PC-3 (cell line): ENCODE measurements at regions of chr6 and their contacts with region 1.

Region 1: DNA sequence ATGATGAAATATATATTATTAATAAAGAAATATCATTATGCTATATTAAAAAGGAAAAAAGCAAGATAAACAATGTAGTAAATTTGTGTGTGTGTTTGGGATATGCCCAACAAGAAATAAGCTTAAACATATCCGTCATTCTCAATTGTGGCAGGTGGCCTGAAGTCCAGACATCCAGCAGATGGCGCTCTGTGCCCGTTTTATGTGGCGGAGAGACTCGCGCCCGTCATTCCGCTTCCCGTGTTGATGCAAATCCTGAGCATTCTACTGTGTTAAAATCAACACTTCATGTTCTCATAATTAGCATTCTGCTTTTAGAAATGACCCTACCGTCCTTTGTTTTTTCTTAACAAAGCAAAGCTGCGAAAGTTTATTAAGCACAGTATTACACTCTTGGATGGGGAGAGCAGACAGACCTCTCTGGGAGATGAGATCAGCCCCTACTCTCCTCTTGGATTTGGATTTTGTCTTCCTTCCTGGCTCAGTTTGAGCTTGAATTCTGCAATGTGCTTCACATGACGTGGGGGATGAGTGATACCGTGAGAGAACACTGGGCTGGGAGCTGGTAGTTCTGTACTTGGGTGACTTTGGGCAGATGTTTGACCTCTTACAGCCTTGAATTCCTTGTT is 125.8 kb downstream of the MCHR2 start:
- DNase-seq: peak; percentile 78
- ATAC-seq: peak; percentile 76
- H3K4me3 ChIP-seq: no peak overlapping the region
- H3K27ac ChIP-seq: no peak overlapping the region
- H3K4me1 ChIP-seq: no peaks in the 10 kb centered on the region
- H3K27me3 ChIP-seq: peaks cover 42% of the 10 kb centered on the region
- CTCF ChIP-seq: peak; percentile 77

Region 2: GRCh38 chr6:99822741-99823512 is 45.3 kb before region 1 on chr6:
- CTCF ChIA-PET with region 1: interaction called, 14 read pairs
- POLR2A ChIA-PET with region 1: no interaction called
- intact Hi-C with region 1: no loop called
- DNase-seq: peak; percentile 66
- ATAC-seq: peak; percentile 92
- H3K4me3 ChIP-seq: peak overlapping the region; percentile 59
- H3K27ac ChIP-seq: no peak overlapping the region
- H3K4me1 ChIP-seq: no peaks in the 10 kb centered on the region
- H3K27me3 ChIP-seq: no peaks in the 10 kb centered on the region
- CTCF ChIP-seq: peak; percentile 74

Region 3: DNA sequence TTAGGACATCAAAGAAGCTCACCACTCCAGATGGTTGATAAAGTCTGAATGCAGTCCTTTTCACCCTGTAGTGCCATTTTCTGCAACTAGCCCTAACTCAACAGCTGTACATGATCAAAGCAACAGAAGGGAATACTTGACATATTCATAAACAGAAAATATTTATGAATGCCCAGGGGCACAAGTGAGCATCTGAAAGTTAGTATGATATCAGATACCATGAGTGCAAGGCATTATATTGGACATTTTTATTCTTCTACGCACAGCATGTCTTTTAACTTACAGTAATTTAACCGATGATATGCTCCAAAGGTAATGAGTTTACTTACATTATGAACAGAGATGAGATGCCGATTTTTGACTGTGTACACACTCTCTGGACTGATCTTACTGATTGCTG is 16.2 kb before region 1 on chr6:
- CTCF ChIA-PET with region 1: no interaction called
- POLR2A ChIA-PET with region 1: no interaction called
- intact Hi-C with region 1: no loop called
- DNase-seq: no peak
- ATAC-seq: no peak
- H3K4me3 ChIP-seq: no peak overlapping the region
- H3K27ac ChIP-seq: no peak overlapping the region
- H3K4me1 ChIP-seq: no peaks in the 10 kb centered on the region
- H3K27me3 ChIP-seq: peaks cover 22% of the 10 kb centered on the region; the same call in 1 of the 2 replicates
- CTCF ChIP-seq: no peak

Region 4: GRCh38 chr6:99905209-99906106 is 37.3 kb after region 1 on chr6:
- CTCF ChIA-PET with region 1: interaction called, 11 read pairs
- POLR2A ChIA-PET with region 1: no interaction called
- intact Hi-C with region 1: loop called (anchors 1 kb)
- DNase-seq: peak; percentile 57
- ATAC-seq: peak; percentile 59
- H3K4me3 ChIP-seq: no peak overlapping the region
- H3K27ac ChIP-seq: no peak overlapping the region
- H3K4me1 ChIP-seq: no peaks in the 10 kb centered on the region
- H3K27me3 ChIP-seq: peaks cover 52% of the 10 kb centered on the region
- CTCF ChIP-seq: peak; percentile 66

Region 5: GRCh38 chr6:100065348-100065747 is 197.2 kb after region 1 on chr6:
- CTCF ChIA-PET with region 1: no interaction called
- POLR2A ChIA-PET with region 1: no interaction called
- intact Hi-C with region 1: no loop called
- DNase-seq: no peak
- ATAC-seq: no peak
- H3K4me3 ChIP-seq: no peak overlapping the region
- H3K27ac ChIP-seq: no peak overlapping the region
- H3K4me1 ChIP-seq: no peaks in the 10 kb centered on the region
- H3K27me3 ChIP-seq: no peaks in the 10 kb centered on the region
- CTCF ChIP-seq: no peak

Region 6: DNA sequence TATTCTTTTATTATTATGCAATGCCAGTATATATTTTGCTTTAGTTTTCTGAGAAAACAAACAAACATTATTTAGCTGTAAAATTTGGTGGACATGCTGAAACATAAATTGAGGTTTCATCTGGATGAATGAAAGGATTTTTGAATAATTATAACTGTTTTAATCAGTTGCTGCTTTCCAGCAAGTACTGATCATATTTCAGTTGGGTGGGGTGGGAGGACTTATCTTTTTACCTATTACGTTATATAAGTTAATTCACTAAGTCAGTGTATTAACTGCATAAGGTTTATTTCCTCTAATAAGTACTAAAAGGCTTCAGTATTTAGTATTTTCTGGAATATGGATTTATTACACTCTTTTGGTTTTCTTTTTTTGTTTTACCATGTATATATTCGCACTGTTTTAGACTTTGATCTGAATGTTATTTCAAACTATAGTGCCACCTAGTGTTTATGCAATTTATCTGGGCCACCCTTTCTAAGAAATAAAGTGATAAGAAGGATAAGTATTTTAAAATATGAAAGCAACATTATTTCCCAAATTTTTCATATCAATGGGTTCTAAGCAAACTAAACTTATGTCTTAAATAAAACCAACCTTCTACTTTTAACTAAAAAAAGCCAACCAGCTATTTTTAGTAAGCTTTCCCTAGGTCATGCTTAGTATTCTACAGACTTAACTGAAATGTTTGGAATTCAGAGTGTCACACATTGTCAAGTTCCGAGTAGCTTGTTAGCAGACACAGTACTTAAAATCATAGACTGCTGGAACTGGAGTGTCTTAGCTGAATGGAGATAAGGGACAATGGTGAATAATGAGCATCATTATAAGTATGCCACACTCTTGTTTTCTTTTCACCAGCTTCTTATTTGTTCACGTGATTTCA is 231.2 kb after region 1 on chr6:
- CTCF ChIA-PET with region 1: interaction called, 11 read pairs
- POLR2A ChIA-PET with region 1: no interaction called
- intact Hi-C with region 1: loop called (anchors 1 kb)
- DNase-seq: peak; percentile 59
- ATAC-seq: peak; percentile 45; the same call in 1 of the 2 replicates
- H3K4me3 ChIP-seq: no peak overlapping the region
- H3K27ac ChIP-seq: no peak overlapping the region
- H3K4me1 ChIP-seq: peaks cover 18% of the 10 kb centered on the region
- H3K27me3 ChIP-seq: no peaks in the 10 kb centered on the region
- CTCF ChIP-seq: peak; percentile 73

Region 7: GRCh38 chr6:100664274-100665040 is 796.3 kb after region 1 on chr6:
- CTCF ChIA-PET with region 1: interaction called, 4 read pairs
- POLR2A ChIA-PET with region 1: no interaction called
- intact Hi-C with region 1: loop called (anchors 5 kb)
- DNase-seq: peak; percentile 41
- ATAC-seq: no peak
- H3K4me3 ChIP-seq: no peak overlapping the region
- H3K27ac ChIP-seq: no peak overlapping the region
- H3K4me1 ChIP-seq: peaks cover 13% of the 10 kb centered on the region
- H3K27me3 ChIP-seq: no peaks in the 10 kb centered on the region
- CTCF ChIP-seq: peak; percentile 55